ENCODE measurements at regions of chr5 and their contacts with region 1.

Region 1: DNA sequence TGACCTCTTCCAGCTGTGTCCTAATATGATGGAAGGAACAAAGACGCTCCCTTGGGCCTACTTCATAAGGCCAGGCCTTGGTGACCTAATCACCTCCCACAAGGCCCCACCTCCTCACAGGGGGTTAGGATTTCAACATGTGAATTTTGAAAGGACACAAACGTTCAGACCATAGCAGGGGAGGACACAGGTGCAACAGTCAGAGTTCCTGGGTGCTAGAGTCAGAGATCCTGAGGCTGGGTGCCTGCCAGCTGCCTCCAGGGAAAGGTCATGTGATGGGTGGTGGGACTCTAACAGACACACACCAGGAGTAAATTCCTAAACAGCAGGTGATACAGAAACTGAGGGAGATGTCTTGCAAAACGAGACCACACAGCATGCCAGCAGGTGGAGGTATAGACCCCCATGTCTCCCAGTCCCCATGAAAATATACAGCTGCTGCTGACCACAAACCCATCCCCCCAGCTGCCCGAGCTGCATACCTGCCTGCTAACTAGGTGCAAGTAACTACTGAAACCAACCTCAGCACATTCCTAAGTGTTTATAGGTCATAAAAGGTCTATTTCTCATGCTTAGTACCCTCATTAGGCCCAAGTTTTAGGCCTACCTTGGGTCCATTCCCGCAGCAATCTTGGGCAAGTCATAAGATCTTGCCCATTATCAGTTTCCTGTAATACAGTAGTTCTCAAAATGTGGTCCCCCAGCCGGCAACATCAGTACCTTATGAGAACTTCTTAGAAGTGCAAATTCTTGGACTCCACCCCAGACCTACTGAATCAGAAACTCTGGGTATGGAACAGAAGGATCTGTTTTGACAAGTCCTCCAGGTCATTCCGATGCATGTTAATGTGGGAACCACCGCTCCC is 245.4 kb downstream of the ENC1 start:
- DNase-seq: peak; percentile 88
- H3K4me3 Mint-ChIP-seq: no peak overlapping the region
- H3K27ac Mint-ChIP-seq: peak overlapping the region; percentile 80
- H3K4me1 Mint-ChIP-seq: peaks cover 61% of the 10 kb centered on the region
- H3K27me3 Mint-ChIP-seq: no peaks in the 10 kb centered on the region
- CTCF ChIP-seq: peak; percentile 33

Region 2: DNA sequence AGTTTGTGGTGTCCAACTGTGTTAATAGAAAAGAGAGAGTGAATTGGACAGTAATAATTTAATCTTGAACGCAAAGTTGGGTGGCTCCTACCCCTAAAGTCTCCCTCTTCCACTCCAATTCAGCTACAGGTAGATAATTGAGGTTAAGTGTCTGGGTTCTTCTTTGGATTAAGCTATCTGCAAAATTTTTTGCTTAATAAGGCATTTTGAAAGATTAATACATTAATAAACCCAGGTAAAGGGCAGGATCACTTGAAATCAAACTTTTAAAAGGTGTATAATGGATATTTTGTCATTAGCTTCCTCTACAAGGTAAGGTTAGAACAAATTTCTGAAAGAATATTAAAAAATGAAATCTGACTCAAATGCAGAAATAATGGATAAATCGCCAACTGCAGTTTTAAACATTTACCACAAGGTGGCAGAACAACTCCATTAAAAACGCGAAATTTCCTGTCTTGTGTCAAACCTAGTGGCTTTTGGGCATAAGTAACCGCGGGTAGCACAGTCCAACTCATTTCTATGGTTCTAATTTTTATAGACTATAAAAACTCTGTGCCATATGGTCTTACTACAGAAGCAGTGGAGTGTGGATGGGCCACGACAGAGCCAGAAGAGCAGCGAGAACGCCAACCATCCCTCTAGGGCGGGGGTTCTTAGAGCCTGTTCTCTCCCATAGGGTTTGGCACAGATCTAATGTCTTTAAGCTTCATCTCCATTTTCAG is 492.7 kb before region 1 on chr5:
- CTCF ChIA-PET with region 1: no interaction called
- intact Hi-C with region 1: loop called (anchors 5 kb)
- DNase-seq: peak; percentile 19
- H3K4me3 Mint-ChIP-seq: no peak overlapping the region
- H3K27ac Mint-ChIP-seq: no peak overlapping the region
- H3K4me1 Mint-ChIP-seq: peaks cover 26% of the 10 kb centered on the region
- H3K27me3 Mint-ChIP-seq: no peaks in the 10 kb centered on the region
- CTCF ChIP-seq: peak; percentile 79

Region 3: GRCh38 chr5:74056789-74057164 is 338.4 kb before region 1 on chr5:
- CTCF ChIA-PET with region 1: no interaction called
- intact Hi-C with region 1: loop called (anchors 10 kb)
- DNase-seq: peak; percentile 62
- H3K4me3 Mint-ChIP-seq: no peak overlapping the region
- H3K27ac Mint-ChIP-seq: no peak overlapping the region
- H3K4me1 Mint-ChIP-seq: peaks cover 8% of the 10 kb centered on the region
- H3K27me3 Mint-ChIP-seq: no peaks in the 10 kb centered on the region
- CTCF ChIP-seq: peak; percentile 41

Region 4: DNA sequence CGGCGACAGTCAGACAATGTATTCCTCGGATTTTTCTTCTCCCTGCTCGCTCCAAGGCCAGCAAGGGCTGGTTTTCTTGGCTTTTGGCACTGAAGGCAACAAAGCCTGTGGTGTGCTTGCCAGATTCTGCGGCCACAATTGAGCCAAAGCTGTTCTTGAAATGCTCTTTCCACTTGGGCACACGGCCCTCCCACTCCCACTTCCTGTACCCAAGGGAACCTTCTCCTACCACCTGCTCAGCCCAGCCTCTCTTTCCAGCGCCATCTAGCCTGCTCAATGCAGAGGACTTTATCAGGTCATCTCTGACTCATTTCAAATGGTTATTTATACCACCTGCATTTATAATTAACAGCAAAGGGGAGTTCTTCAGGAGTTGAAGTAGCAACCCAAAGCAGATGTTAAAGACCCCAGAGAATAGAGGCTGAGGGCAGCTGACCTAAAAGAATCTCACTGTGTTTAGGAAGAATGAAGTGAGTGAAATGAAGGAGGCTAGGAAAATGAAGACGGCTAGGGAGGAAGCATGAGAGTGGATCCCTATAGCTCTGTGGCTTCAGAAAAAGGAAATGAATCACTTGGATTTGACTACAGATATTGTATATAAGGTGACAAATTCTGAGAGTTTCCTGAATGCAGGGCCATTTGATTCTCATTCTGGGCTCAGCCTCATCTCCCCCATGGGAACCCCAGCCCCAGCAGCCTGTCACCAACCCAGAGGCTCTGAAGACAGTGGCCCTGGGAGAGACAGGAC is 193.6 kb before region 1 on chr5:
- CTCF ChIA-PET with region 1: interaction called, 7 read pairs
- intact Hi-C with region 1: loop called (anchors 5 kb)
- DNase-seq: peak; percentile 75
- H3K4me3 Mint-ChIP-seq: peak overlapping the region; percentile 48
- H3K27ac Mint-ChIP-seq: peak overlapping the region; percentile 91
- H3K4me1 Mint-ChIP-seq: peaks cover 49% of the 10 kb centered on the region
- H3K27me3 Mint-ChIP-seq: no peaks in the 10 kb centered on the region
- CTCF ChIP-seq: no peak

Region 5: GRCh38 chr5:74326571-74327338 is 68.4 kb before region 1 on chr5:
- CTCF ChIA-PET with region 1: no interaction called
- intact Hi-C with region 1: loop called (anchors 5 kb)
- DNase-seq: peak; percentile 83
- H3K4me3 Mint-ChIP-seq: no peak overlapping the region
- H3K27ac Mint-ChIP-seq: peak overlapping the region; percentile 63
- H3K4me1 Mint-ChIP-seq: peaks cover 44% of the 10 kb centered on the region
- H3K27me3 Mint-ChIP-seq: no peaks in the 10 kb centered on the region
- CTCF ChIP-seq: no peak

Region 6: DNA sequence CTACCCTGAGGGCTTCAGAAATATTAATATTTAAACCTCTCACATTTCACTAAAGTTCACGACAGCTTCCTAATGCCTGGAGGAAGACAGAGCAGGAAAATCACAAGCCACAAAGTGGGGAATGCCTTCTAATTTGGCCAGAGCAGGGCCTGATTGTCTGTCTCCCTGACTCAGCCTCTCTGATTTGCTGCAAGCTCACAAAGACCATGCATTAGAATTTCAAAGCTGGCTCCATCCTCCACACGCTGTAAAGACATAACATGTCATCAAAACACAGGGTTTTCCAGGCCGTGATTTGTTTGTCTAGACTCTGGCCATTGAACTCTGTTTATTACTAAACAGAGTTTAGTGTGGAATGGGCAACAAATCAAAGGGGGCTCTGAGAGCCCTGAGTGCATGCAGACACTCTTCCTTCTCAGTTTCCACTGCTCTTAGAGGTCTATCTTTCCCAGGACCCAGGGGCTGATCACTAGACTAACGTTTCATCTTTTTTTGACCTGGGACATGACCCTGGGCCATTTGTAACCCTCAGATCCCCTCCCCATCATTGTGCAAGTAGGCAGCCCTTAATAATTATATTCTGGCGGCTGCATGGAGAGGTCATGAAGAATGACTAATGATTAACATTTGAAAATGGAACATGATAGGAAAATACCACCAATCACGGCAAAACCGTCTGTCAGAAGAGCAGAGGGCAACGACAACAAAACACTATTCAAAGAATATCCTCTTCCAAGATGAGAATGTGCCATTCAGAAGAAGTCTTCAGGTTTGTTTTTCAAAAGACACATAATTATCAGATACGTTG is 105.2 kb after region 1 on chr5:
- CTCF ChIA-PET with region 1: no interaction called
- intact Hi-C with region 1: loop called (anchors 5 kb)
- DNase-seq: peak; percentile 21
- H3K4me3 Mint-ChIP-seq: no peak overlapping the region
- H3K27ac Mint-ChIP-seq: peak overlapping the region; percentile 63
- H3K4me1 Mint-ChIP-seq: peaks cover 55% of the 10 kb centered on the region
- H3K27me3 Mint-ChIP-seq: no peaks in the 10 kb centered on the region
- CTCF ChIP-seq: no peak

Region 7: GRCh38 chr5:74589204-74590056 is 194.3 kb after region 1 on chr5:
- CTCF ChIA-PET with region 1: no interaction called
- intact Hi-C with region 1: loop called (anchors 1 kb)
- DNase-seq: peak; percentile 37
- H3K4me3 Mint-ChIP-seq: peak overlapping the region; percentile 54
- H3K27ac Mint-ChIP-seq: peak overlapping the region; percentile 60
- H3K4me1 Mint-ChIP-seq: peaks cover 67% of the 10 kb centered on the region
- H3K27me3 Mint-ChIP-seq: no peaks in the 10 kb centered on the region
- CTCF ChIP-seq: no peak

Measured in Calu3 (cell line).